Activated CD8-positive, alpha-beta T cell treated with anti-CD3 and anti-CD28 coated beads for 36 hours (primary cell): ENCODE measurements at regions of chr1 and their contacts with region 1.

Region 1: DNA sequence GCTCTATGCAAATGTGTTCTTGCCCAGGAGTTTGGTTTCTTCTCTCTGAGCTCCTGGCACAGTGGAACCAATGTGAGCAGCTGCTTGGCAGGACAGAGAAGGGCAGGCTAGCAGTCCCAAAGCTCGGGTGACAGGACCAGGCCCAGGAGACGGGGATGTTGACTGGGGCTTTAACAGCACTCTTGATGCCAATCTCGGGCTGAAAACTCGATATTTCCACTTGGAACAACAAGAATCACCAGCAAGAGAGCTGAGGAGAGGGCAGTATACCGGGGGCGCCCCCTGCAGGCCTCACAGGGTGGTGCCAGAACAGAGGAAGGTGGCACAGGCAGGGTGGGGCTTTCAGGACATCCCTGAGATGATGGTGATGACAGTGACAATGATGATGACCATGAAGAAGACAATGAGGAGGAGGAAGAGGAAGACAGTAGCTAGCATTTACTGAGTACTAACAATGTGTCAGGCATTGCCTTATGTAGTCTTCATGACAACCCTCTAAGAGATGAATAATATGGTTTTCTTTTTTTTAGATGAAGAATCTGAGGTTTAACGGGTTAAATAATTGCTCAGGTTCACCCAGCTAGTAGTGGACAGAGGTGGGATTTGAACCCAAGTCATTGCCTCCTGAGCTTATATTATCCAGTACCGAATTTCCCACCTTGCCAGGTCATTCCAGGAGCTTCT is 2.7 kb upstream of the KCNJ9 start:
- DNase-seq: peak; percentile 86
- ATAC-seq: peak; percentile 97
- H3K4me3 Mint-ChIP-seq: no peak overlapping the region
- H3K27ac Mint-ChIP-seq: no peak overlapping the region
- H3K4me1 Mint-ChIP-seq: peaks cover 13% of the 10 kb centered on the region
- H3K27me3 Mint-ChIP-seq: peaks cover 50% of the 10 kb centered on the region
- CTCF ChIP-seq: peak; percentile 87

Region 2: GRCh38 chr1:160031365-160032164 is 47.1 kb before region 1 on chr1 and contains the start of gene PIGM:
- CTCF ChIA-PET with region 1: interaction called, 693 read pairs
- POLR2A ChIA-PET with region 1: interaction called, 3 read pairs
- intact Hi-C with region 1: loop called (anchors 10 kb)
- DNase-seq: peak; percentile 98
- ATAC-seq: peak; percentile 99
- H3K4me3 Mint-ChIP-seq: peak within 1 kb of the TSS; percentile 88
- H3K27ac Mint-ChIP-seq: peak within 1 kb of the TSS; percentile 81
- H3K4me1 Mint-ChIP-seq: peaks cover 32% of the 10 kb centered on the region
- H3K27me3 Mint-ChIP-seq: no peaks in the 10 kb centered on the region
- CTCF ChIP-seq: no peak
- total RNA-seq, gene PIGM: 3.9 to 4.0 TPM

Region 3: GRCh38 chr1:160046494-160047110 is 32.1 kb before region 1 on chr1:
- CTCF ChIA-PET with region 1: interaction called, 693 read pairs
- POLR2A ChIA-PET with region 1: interaction called, 11 read pairs
- intact Hi-C with region 1: no loop called
- DNase-seq: peak; percentile 54
- ATAC-seq: peak; percentile 87
- H3K4me3 Mint-ChIP-seq: peak overlapping the region; percentile 70
- H3K27ac Mint-ChIP-seq: peak overlapping the region; percentile 81
- H3K4me1 Mint-ChIP-seq: peaks cover 12% of the 10 kb centered on the region
- H3K27me3 Mint-ChIP-seq: peaks cover 12% of the 10 kb centered on the region
- CTCF ChIP-seq: peak; percentile 91

Region 4: GRCh38 chr1:160058087-160058486 is 20.6 kb before region 1 on chr1:
- CTCF ChIA-PET with region 1: interaction called, 693 read pairs
- POLR2A ChIA-PET with region 1: no interaction called
- intact Hi-C with region 1: no loop called
- DNase-seq: no peak
- ATAC-seq: no peak
- H3K4me3 Mint-ChIP-seq: no peak overlapping the region
- H3K27ac Mint-ChIP-seq: no peak overlapping the region
- H3K4me1 Mint-ChIP-seq: no peaks in the 10 kb centered on the region
- H3K27me3 Mint-ChIP-seq: peaks cover 15% of the 10 kb centered on the region
- CTCF ChIP-seq: no peak

Region 5: GRCh38 chr1:160108888-160109662 is 30.4 kb after region 1 on chr1:
- CTCF ChIA-PET with region 1: interaction called, 58 read pairs
- POLR2A ChIA-PET with region 1: no interaction called
- intact Hi-C with region 1: no loop called
- DNase-seq: peak; percentile 69
- ATAC-seq: peak; percentile 74
- H3K4me3 Mint-ChIP-seq: no peak overlapping the region
- H3K27ac Mint-ChIP-seq: peak overlapping the region; percentile 84
- H3K4me1 Mint-ChIP-seq: peaks cover 6% of the 10 kb centered on the region
- H3K27me3 Mint-ChIP-seq: peaks cover 4% of the 10 kb centered on the region
- CTCF ChIP-seq: peak; percentile 54